CD4-positive, alpha-beta T cell (primary cell): ENCODE measurements at regions of chr4 and their contacts with region 1.

Region 1: DNA sequence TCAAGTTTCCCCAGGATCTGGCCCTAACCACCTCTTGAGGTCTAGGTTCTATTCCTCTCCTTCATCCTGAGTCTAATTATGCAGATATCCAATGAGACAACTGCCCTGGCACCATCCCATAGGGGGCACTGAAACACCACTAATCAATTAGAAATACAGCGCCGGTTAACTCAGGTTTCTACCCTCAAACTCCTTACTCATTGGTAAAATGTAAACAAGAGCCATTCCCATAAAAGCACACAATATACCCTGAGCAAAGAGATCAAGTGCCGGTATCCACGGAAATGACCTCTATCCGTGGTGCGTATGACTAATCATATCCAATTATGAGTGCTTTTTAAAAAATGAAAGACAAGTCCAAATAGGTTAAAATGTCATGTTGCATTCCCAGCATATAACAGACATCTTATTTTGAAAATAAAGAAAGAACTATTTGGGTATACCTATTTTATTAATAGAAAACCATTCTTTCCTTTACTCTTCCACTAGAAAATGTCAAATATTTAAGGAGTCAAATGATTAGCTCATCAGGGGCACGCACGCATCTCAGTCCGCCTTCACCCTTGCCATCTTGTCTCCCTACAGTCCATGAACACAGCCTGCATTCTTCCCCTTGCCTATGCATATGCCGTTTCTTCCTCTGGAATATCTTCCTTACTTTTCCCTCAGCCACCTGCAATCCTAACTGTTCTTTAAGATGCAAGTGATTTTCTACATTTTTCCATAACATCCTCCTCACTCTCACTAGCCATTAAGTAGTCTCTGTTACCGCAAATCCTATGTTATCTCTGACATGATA is 141.1 kb downstream of the MAML3 start:
- DNase-seq: peak; percentile 44 to 81 (median 55)
- ATAC-seq: peak; percentile 93
- H3K4me3 ChIP-seq: no peak overlapping the region
- H3K4me3 Mint-ChIP-seq: no peak overlapping the region
- H3K27ac ChIP-seq: no peak overlapping the region
- H3K27ac Mint-ChIP-seq: no peak overlapping the region
- H3K4me1 ChIP-seq: no peaks in the 10 kb centered on the region
- H3K4me1 Mint-ChIP-seq: no peaks in the 10 kb centered on the region
- H3K27me3 ChIP-seq: no peaks in the 10 kb centered on the region
- H3K27me3 Mint-ChIP-seq: peaks cover 7% of the 10 kb centered on the region
- CTCF ChIP-seq: peak; percentile 82

Region 2: DNA sequence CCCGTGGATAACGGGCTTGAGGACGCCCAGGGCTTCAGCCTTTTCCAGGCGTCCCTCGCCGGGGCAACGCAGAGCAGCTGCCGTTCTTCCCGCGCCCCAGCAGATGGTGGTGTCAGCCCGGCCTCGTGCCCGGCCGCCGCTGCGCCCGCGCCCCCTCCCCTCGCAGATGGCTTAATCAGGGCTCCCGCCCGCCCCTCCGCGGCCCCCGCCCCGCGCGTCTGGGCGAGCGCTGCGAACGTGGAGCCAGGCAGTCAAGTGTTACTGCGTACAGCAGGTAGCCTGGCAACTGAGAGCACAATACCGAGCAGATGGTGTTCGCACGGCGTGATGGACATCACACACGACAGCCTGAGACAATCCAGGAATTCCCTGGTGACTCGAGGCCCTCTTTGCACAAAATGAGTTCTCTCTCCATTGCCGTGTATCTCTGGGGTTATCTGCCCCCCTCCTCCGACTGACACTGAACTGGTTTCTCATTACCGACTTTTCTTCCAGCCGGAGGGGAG is 278.0 kb before region 1 on chr4:
- CTCF ChIA-PET with region 1: no interaction called
- POLR2A ChIA-PET with region 1: no interaction called
- intact Hi-C with region 1: loop called in 1 of 2 experiments (anchors 10 kb)
- DNase-seq: peak; percentile 6 to 78 (median 40)
- ATAC-seq: peak; percentile 83
- H3K4me3 ChIP-seq: peak overlapping the region; percentile 44
- H3K4me3 Mint-ChIP-seq: peak overlapping the region; percentile 69
- H3K27ac ChIP-seq: no peak overlapping the region
- H3K27ac Mint-ChIP-seq: no peak overlapping the region
- H3K4me1 ChIP-seq: peaks cover 13% of the 10 kb centered on the region
- H3K4me1 Mint-ChIP-seq: peaks cover 14% of the 10 kb centered on the region
- H3K27me3 ChIP-seq: peaks cover 12 to 35% of the 10 kb centered on the region in 2 experiments
- H3K27me3 Mint-ChIP-seq: peaks cover 53% of the 10 kb centered on the region
- CTCF ChIP-seq: peak; percentile 51

Region 3: DNA sequence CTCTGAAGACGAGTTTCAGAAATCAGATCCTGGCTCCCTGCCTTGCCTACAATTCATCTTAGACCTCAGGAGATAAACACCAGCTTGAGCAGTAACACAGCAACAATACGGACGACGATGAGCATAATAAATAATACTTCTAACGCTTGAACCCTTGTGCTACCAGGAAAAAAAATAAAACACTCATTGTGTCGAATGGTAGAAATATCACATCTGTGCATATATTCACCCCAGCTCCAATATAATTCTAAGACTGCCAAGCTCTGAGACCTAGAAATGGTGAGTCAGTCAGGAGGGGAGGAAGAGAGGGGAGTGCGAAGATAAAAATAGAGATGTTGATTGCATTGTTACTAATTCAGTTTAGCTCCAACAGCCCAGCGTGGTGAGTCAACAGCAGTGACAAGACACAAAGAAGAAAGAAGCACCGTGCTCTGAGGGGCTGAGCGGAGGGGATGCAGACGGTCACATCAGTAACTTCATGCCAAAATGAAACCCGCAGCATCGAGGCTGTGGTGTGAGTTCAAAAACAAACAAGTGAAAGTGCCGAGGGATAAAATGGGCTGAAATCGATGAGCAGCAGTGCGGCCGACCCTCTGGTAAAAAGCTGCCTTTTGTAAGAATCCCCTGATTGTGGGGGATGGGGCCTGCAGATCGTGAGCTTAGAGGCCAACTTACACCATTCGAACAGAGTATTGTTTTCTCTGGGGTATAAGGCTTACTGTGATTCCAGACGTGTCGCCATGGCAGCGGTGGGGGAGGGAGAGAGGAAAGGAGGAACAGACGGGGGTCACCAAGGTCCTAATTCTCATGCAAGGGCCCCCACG is 196.9 kb before region 1 on chr4:
- CTCF ChIA-PET with region 1: no interaction called
- POLR2A ChIA-PET with region 1: no interaction called
- intact Hi-C with region 1: no loop called
- DNase-seq: peak in 2 of 14 experiments; percentile 41 to 54
- ATAC-seq: no peak
- H3K4me3 ChIP-seq: no peak overlapping the region
- H3K4me3 Mint-ChIP-seq: no peak overlapping the region
- H3K27ac ChIP-seq: no peak overlapping the region
- H3K27ac Mint-ChIP-seq: no peak overlapping the region
- H3K4me1 ChIP-seq: no peaks in the 10 kb centered on the region
- H3K4me1 Mint-ChIP-seq: no peaks in the 10 kb centered on the region
- H3K27me3 ChIP-seq: no peaks in the 10 kb centered on the region
- H3K27me3 Mint-ChIP-seq: no peaks in the 10 kb centered on the region
- CTCF ChIP-seq: no peak

Region 4: DNA sequence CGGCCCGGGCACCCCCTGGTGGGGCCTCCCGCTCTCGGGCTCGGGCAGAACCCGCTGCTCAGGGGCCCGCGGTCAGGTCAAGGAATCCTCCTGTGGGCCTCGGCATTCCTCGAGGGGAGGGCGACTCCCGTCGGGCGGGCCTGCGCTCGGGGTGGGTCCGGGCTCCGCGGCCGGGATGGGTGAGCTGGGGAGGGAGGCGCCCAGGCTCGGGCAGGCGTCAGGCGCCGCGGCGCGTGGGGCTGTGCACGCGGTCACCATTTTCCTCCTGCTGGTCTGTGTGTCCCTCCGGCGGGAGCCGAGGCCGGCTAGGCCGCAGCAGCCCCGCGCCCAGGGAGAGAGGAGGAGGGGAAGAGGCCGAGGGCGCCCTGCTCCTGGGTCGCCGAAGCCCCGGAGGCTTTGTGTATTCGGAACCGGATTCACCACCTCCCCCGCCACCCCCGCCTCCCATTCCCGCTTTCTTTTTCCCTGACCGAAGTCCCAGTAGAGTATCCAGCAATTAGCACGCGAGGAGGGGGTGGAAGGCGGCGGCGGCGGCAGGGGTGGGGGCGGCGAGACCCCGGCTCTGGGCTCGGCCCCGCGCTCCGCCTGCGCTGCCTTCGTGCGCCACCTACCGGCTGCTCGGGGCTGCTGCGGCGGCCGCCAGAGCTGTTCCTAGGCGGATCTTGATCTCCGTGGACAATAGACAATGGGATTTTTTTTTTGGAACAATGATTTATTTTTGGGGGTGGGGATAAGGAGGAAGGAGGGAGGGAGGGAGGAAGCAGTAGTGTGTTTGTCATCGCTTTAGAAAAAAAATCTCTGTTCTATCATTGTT is 240.1 kb after region 1 on chr4:
- CTCF ChIA-PET with region 1: interaction called, 35 read pairs
- POLR2A ChIA-PET with region 1: interaction called, 7 read pairs
- intact Hi-C with region 1: loop called (anchors 1 kb)
- DNase-seq: peak; percentile 24 to 82 (median 56)
- ATAC-seq: peak; percentile 75
- H3K4me3 ChIP-seq: peak overlapping the region; percentile 59
- H3K4me3 Mint-ChIP-seq: peak overlapping the region; percentile 87
- H3K27ac ChIP-seq: no peak overlapping the region
- H3K27ac Mint-ChIP-seq: no peak overlapping the region
- H3K4me1 ChIP-seq: peaks cover 7% of the 10 kb centered on the region
- H3K4me1 Mint-ChIP-seq: peaks cover 16% of the 10 kb centered on the region
- H3K27me3 ChIP-seq: peaks cover 8 to 9% of the 10 kb centered on the region in 2 experiments
- H3K27me3 Mint-ChIP-seq: peaks cover 13% of the 10 kb centered on the region
- CTCF ChIP-seq: peak; percentile 94

Region 5: GRCh38 chr4:140351093-140352075 is 338.5 kb after region 1 on chr4:
- CTCF ChIA-PET with region 1: no interaction called
- POLR2A ChIA-PET with region 1: no interaction called
- intact Hi-C with region 1: loop called in 1 of 2 experiments (anchors 2 kb)
- DNase-seq: no peak
- ATAC-seq: no peak
- H3K4me3 ChIP-seq: no peak overlapping the region
- H3K4me3 Mint-ChIP-seq: no peak overlapping the region
- H3K27ac ChIP-seq: no peak overlapping the region
- H3K27ac Mint-ChIP-seq: no peak overlapping the region
- H3K4me1 ChIP-seq: peaks cover 11% of the 10 kb centered on the region
- H3K4me1 Mint-ChIP-seq: peaks cover 18% of the 10 kb centered on the region
- H3K27me3 ChIP-seq: no peaks in the 10 kb centered on the region
- H3K27me3 Mint-ChIP-seq: no peaks in the 10 kb centered on the region
- CTCF ChIP-seq: no peak

Region 6: GRCh38 chr4:141229408-141230101 is 1216.7 kb after region 1 on chr4:
- CTCF ChIA-PET with region 1: no interaction called
- POLR2A ChIA-PET with region 1: no interaction called
- intact Hi-C with region 1: no loop called
- DNase-seq: no peak
- ATAC-seq: no peak
- H3K4me3 ChIP-seq: no peak overlapping the region
- H3K4me3 Mint-ChIP-seq: no peak overlapping the region
- H3K27ac ChIP-seq: no peak overlapping the region
- H3K27ac Mint-ChIP-seq: no peak overlapping the region
- H3K4me1 ChIP-seq: no peaks in the 10 kb centered on the region
- H3K4me1 Mint-ChIP-seq: peaks cover 15% of the 10 kb centered on the region
- H3K27me3 ChIP-seq: no peaks in the 10 kb centered on the region
- H3K27me3 Mint-ChIP-seq: no peaks in the 10 kb centered on the region
- CTCF ChIP-seq: no peak